H1 (cell line): ENCODE measurements at regions of chr1 and their contacts with region 1.

Region 1: GRCh38 chr1:70354332-70355110 is at the start of gene ANKRD13C:
- DNase-seq: peak; percentile 83 to 93
- H3K4me3 ChIP-seq: peak within 1 kb of the TSS; percentile 86 to 97 (median 90)
- H3K27ac ChIP-seq: peak within 1 kb of the TSS; percentile 98
- H3K4me1 ChIP-seq: no peaks in the 10 kb centered on the region
- H3K27me3 ChIP-seq: no peaks in the 10 kb centered on the region
- CTCF ChIP-seq: 0 out of 4 replicates have a peak, but pooled peaks of 1 of the 3 experiments have one; percentile 2
- EP300 ChIP-seq: no peak
- POLR2A ChIP-seq: peak; percentile 94 to 98
- RAD21 ChIP-seq: peak; percentile 8 to 17; a peak in 2 of 4 replicates
- total RNA-seq, gene ANKRD13C: 20.9 and 21.7 TPM in 2 replicates

Region 2: DNA sequence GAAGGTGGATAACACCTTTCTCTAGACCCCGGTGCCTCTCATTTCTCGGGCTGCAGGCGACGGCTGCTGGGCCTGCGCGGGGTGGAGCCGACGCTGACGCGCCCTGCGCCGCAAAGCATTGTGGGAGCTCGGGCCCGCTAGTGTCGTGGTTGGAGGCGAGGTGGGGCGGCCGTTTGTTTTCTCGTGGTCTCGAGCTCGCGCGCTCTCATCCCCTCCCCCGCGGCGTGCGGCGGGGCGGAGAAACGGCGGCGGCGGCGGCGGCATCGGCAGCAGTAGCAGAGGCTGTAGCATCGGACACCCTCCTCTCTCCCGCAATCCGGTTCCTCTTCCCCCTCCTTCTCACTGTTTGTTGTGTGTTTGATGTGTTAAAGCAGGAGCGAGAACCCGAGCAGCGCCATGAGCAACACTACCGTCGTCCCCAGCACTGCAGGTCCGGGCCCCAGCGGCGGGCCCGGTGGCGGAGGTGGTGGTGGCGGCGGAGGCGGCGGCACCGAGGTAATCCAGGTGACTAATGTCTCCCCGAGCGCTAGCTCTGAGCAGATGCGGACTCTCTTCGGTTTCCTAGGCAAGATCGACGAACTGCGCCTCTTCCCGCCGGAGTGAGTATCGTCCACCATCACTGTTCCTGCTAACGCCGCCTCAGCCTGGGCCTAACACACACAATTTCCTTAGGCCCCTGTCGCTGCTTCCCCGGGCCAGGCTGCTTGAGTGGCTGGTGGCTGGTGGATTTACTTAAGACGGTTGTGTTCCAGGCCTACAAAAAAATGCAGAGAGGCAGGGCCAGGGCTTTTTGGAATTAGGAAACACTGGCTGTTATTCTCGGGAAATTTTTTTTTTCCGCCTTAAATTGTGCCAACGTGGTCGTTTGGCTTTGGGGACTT is 133.0 kb before region 1 on chr1 and contains the start of gene SRSF11:
- CTCF ChIA-PET with region 1: no interaction called
- POLR2A ChIA-PET with region 1: interaction called, 10 read pairs
- DNase-seq: peak; percentile 73 to 98
- H3K4me3 ChIP-seq: peak within 1 kb of the TSS; percentile 92 to 95 (median 94)
- H3K27ac ChIP-seq: peak within 1 kb of the TSS; percentile 94
- H3K4me1 ChIP-seq: no peaks in the 10 kb centered on the region
- H3K27me3 ChIP-seq: no peaks in the 10 kb centered on the region
- CTCF ChIP-seq: no peak
- EP300 ChIP-seq: no peak; a peak in 1 of 3 replicates
- POLR2A ChIP-seq: peak; percentile 75 to 99
- RAD21 ChIP-seq: no peak
- total RNA-seq, gene SRSF11: 169 and 183 TPM in 2 replicates

Region 3: GRCh38 chr1:70415882-70416281 is 61.4 kb after region 1 on chr1:
- CTCF ChIA-PET with region 1: interaction called, 8 read pairs
- POLR2A ChIA-PET with region 1: interaction called, 103 read pairs
- DNase-seq: no peak
- H3K4me3 ChIP-seq: no peak overlapping the region
- H3K27ac ChIP-seq: no peak overlapping the region
- H3K4me1 ChIP-seq: peaks cover 0 to 2% (median 0%) of the 10 kb centered on the region in 4 experiments; a peak in 2 of 7 replicates
- H3K27me3 ChIP-seq: no peaks in the 10 kb centered on the region
- CTCF ChIP-seq: no peak
- EP300 ChIP-seq: no peak
- POLR2A ChIP-seq: no peak
- RAD21 ChIP-seq: no peak

Region 4: GRCh38 chr1:70552662-70553566 is 198.4 kb after region 1 on chr1:
- CTCF ChIA-PET with region 1: no interaction called
- POLR2A ChIA-PET with region 1: no interaction called
- DNase-seq: no peak
- H3K4me3 ChIP-seq: no peak overlapping the region
- H3K27ac ChIP-seq: no peak overlapping the region
- H3K4me1 ChIP-seq: peaks cover 1 to 8% (median 5%) of the 10 kb centered on the region in 4 experiments; a peak in 3 of 7 replicates
- H3K27me3 ChIP-seq: no peaks in the 10 kb centered on the region
- CTCF ChIP-seq: no peak
- EP300 ChIP-seq: no peak
- POLR2A ChIP-seq: no peak
- RAD21 ChIP-seq: no peak